Mammary epithelial cell (primary cell): ENCODE measurements at regions of chr17 and their contacts with region 1.

Region 1: DNA sequence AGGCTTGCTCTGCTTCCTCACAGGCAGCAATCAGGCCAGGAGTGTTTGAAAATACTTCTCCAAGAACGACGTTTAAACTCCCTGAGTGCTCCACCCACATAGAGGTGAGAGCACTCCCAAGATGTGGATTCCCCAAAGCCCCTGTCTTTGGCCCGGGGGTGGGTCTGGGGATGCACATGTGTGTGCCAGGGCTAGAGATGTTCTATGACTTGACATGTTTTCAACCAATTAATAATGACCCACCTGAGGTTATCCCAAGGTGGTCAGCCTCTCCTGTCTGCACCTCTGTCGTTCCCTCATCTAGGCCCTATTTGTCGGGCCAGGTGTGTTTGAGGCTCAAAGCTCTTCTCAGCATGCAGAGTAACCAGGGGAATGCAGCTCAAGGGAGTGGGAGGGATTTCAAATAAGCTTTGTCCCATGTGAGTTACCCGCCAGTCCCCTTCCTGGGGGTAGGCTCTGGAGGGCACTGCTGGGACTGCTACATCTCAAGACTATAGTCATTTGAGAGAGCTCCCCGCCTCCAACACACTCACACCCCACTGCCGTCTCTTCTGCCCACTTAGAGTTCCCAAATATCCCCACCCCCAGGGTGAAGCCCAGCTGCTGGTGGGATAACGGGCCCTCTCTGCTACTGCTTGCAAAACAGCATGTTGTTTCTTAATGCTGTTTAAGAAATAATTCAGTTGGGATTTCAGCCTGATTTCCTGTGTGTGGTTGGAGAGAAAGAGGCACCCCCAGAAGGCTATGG is 3.8 kb upstream of the MPO start:
- DNase-seq: no peak
- H3K4me3 ChIP-seq: no peak overlapping the region
- H3K27ac ChIP-seq: no peak overlapping the region
- H3K4me1 ChIP-seq: no peaks in the 10 kb centered on the region
- H3K27me3 ChIP-seq: peaks cover 5% of the 10 kb centered on the region
- CTCF ChIP-seq: no peak

Region 2: DNA sequence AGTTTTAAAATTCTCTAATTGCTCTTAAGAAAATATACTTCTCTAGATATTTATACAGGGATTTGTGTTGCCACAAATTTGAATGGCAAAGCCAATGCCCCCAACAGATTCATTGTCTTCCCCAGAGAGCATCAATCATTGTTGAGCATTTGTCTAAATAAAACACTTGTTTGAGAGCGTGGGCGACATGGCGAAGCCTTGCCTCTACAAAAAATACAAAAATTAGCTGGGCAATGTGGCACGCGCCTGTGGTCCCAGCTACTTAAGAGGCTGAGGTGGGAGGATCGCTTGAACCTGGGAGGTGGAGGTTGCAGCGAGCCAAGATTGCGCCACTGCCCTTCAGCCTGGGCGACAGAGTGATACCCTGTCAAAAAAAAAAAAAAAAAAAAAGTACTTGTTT is 264.1 kb before region 1 on chr17:
- CTCF ChIA-PET with region 1: no interaction called
- dilution Hi-C with region 1: no loop called
- in situ Hi-C with region 1: no loop called
- intact Hi-C with region 1: no loop called
- DNase-seq: no peak
- H3K4me3 ChIP-seq: no peak overlapping the region
- H3K27ac ChIP-seq: no peak overlapping the region
- H3K4me1 ChIP-seq: peaks cover 9% of the 10 kb centered on the region
- H3K27me3 ChIP-seq: no peaks in the 10 kb centered on the region
- CTCF ChIP-seq: no peak

Region 3: GRCh38 chr17:58329035-58329809 is 44.7 kb after region 1 on chr17:
- CTCF ChIA-PET with region 1: no interaction called
- dilution Hi-C with region 1: loop called (anchors 5 kb)
- in situ Hi-C with region 1: no loop called
- intact Hi-C with region 1: no loop called
- DNase-seq: no peak
- H3K4me3 ChIP-seq: no peak overlapping the region
- H3K27ac ChIP-seq: no peak overlapping the region
- H3K4me1 ChIP-seq: peaks cover 7% of the 10 kb centered on the region
- H3K27me3 ChIP-seq: peaks cover 13% of the 10 kb centered on the region
- CTCF ChIP-seq: peak; percentile 18 to 20